Activated naive CD4-positive, alpha-beta T cell treated with anti-CD3 and anti-CD28 coated beads for 36 hours (primary cell): ENCODE measurements at regions of chr22 and their contacts with region 1.

Region 1: DNA sequence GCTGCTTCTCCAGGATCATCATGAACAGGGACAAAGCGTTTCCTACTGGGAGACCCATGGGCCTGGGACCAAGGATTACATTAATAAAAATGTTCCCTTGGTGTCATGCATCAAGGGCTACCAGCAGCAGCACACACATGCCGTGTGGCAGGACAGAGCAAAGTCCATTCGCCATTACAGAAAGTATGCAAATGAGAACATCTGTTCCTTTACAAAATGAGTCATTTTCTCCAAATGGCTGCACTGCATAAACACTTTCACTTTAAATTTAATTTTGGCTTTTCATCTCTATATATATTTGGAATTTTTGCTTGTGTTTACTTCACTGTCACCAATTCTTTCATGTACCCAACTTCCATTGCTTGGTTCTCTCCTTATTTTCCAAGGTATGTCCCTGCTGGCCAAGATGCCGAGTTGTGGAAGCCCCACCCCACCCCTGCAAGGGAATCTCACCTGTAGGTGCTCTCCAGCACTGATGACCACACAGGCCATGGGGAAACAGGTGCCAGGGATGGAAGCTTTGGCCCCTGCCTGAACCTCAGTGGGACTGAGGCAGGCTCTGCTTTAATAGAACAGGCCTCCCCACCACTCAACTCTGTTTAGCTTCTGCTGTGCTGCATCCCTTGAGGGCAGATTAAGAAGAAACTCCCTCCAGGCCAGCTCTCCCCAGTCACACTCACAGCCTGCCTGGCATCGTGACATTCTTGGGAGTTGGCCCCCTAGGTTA is 15.6 kb upstream of the GNAZ start:
- DNase-seq: no peak
- H3K4me3 Mint-ChIP-seq: no peak overlapping the region
- H3K27ac Mint-ChIP-seq: no peak overlapping the region
- H3K4me1 Mint-ChIP-seq: no peaks in the 10 kb centered on the region
- H3K27me3 Mint-ChIP-seq: peaks cover 8% of the 10 kb centered on the region

Region 2: DNA sequence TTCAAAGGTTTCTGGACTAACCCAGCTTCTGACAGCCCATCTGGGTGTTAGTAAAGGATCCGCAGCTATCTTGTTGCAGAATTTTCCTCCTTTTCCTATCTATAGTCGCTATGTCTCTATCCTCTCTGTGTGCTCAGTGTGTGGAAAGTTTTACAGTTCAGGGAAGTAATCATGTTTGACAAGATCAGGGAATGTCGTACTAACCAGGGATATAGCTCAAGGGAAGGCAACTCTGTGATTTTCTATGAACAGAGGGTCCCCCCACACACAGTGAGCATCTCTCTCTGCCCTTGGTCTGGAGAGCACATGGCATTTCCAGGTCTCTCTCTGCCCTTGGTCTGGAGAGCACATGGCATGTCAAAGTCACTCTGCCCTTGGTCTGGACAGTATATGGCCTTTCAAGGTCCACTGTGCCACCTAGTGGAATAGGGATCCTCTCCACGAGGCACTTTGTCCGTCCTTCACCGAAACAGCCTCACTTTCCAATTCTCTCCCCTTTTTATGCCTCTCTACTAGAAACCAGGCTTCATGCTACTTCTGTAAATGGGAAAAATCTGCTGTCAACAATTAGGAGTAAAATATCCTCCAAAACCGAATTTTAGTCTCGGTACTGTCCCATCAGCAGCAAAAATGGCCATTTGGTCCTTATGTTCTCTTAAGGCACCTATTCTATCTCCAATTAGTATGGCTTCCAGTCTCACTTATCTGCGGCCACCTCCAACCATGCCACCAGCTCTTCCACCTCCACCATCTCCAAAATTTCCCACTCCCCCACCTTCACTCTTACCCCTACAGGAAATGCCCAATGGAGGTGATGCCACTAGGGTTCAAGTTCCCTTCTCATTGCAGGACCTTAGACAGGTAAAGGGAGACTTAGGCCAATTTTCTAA is 78.4 kb before region 1 on chr22:
- CTCF ChIA-PET with region 1: no interaction called
- intact Hi-C with region 1: loop called (anchors 10 kb)
- DNase-seq: no peak
- H3K4me3 Mint-ChIP-seq: no peak overlapping the region
- H3K27ac Mint-ChIP-seq: no peak overlapping the region
- H3K4me1 Mint-ChIP-seq: no peaks in the 10 kb centered on the region
- H3K27me3 Mint-ChIP-seq: peaks cover 22% of the 10 kb centered on the region

Region 3: DNA sequence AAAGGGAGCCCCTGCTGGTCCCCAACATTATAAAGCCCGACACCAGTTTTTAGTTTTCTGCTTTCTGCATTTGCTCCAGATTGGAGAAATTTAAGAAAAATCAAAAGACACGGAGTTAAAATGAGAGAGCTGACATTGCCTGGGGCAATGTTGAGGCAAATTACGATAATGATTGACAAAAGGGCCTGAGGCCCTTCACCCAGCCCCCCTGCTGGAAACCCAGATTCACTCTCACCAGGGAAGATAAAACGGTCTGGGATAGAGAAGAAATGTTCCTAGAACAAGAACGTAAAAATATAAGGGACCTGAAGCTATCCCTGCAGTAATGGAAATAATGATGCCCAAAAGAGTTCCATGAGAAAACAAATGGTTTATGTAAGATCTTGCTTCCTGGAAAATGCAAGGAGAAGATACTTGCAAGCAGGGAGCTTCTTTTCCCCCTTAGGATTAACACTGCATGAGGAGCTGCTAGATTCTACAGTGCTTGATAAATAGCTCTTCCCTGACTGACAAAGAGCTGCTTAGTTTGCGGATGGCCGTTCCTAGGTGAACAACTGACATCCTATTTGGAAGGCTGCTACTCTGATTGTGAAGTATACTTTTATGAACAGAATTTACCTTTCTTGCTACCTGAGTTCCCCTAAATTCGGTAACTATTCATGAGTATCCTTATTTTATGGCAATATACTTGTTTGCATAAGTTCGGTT is 25.0 kb before region 1 on chr22:
- CTCF ChIA-PET with region 1: no interaction called
- intact Hi-C with region 1: no loop called
- DNase-seq: no peak
- H3K4me3 Mint-ChIP-seq: no peak overlapping the region
- H3K27ac Mint-ChIP-seq: no peak overlapping the region
- H3K4me1 Mint-ChIP-seq: no peaks in the 10 kb centered on the region
- H3K27me3 Mint-ChIP-seq: no peaks in the 10 kb centered on the region